ENCODE measurements at regions of chr1 and their contacts with region 1.

Region 1: GRCh38 chr1:30657759-30658253 is 65.6 kb downstream of the MATN1 start:
- DNase-seq: no peak
- ATAC-seq: no peak
- H3K4me3 ChIP-seq: no peak overlapping the region
- H3K27ac ChIP-seq: no peak overlapping the region
- H3K4me1 ChIP-seq: no peaks in the 10 kb centered on the region
- H3K27me3 ChIP-seq: peaks cover 12% of the 10 kb centered on the region; the same call in 1 of the 2 replicates
- CTCF ChIP-seq: no peak
- POLR2A ChIP-seq: no peak
- RAD21 ChIP-seq: no peak

Region 2: GRCh38 chr1:29550119-29550898 is 1107.5 kb before region 1 on chr1:
- CTCF ChIA-PET with region 1: no interaction called
- POLR2A ChIA-PET with region 1: no interaction called
- dilution Hi-C with region 1: no loop called
- in situ Hi-C with region 1: no loop called
- intact Hi-C with region 1: loop called (anchors 5 kb)
- DNase-seq: no peak
- ATAC-seq: no peak
- H3K4me3 ChIP-seq: no peak overlapping the region
- H3K27ac ChIP-seq: no peak overlapping the region
- H3K4me1 ChIP-seq: no peaks in the 10 kb centered on the region
- H3K27me3 ChIP-seq: peaks cover 3% of the 10 kb centered on the region; the same call in 1 of the 2 replicates
- CTCF ChIP-seq: no peak
- POLR2A ChIP-seq: no peak
- RAD21 ChIP-seq: no peak